ENCODE measurements at regions of chr17 and their contacts with region 1.

Region 1: GRCh38 chr17:31433091-31433790 is 41.8 kb downstream of the RAB11FIP4 start:
- DNase-seq: peak; percentile 20 to 71 (median 55)
- ATAC-seq: peak; percentile 89
- H3K4me3 ChIP-seq: no peak overlapping the region
- H3K4me3 Mint-ChIP-seq: peak overlapping the region; percentile 62
- H3K27ac ChIP-seq: no peak overlapping the region
- H3K27ac Mint-ChIP-seq: peak overlapping the region; percentile 33
- H3K4me1 ChIP-seq: peaks cover 16% of the 10 kb centered on the region
- H3K4me1 Mint-ChIP-seq: peaks cover 20% of the 10 kb centered on the region
- H3K27me3 ChIP-seq: peaks cover 0 to 2% of the 10 kb centered on the region in 2 experiments
- H3K27me3 Mint-ChIP-seq: peaks cover 13% of the 10 kb centered on the region
- CTCF ChIP-seq: no peak

Region 2: GRCh38 chr17:31388770-31389661 is 44.2 kb before region 1 on chr17:
- CTCF ChIA-PET with region 1: interaction called, 12 read pairs
- POLR2A ChIA-PET with region 1: no interaction called
- intact Hi-C with region 1: no loop called
- DNase-seq: peak in 8 of 9 experiments; percentile 16 to 70 (median 52)
- ATAC-seq: peak; percentile 71
- H3K4me3 ChIP-seq: no peak overlapping the region
- H3K4me3 Mint-ChIP-seq: no peak overlapping the region
- H3K27ac ChIP-seq: no peak overlapping the region
- H3K27ac Mint-ChIP-seq: no peak overlapping the region
- H3K4me1 ChIP-seq: peaks cover 11% of the 10 kb centered on the region
- H3K4me1 Mint-ChIP-seq: peaks cover 9% of the 10 kb centered on the region
- H3K27me3 ChIP-seq: peaks cover 8 to 10% of the 10 kb centered on the region in 2 experiments
- H3K27me3 Mint-ChIP-seq: peaks cover 30% of the 10 kb centered on the region
- CTCF ChIP-seq: peak; percentile 58

Region 3: DNA sequence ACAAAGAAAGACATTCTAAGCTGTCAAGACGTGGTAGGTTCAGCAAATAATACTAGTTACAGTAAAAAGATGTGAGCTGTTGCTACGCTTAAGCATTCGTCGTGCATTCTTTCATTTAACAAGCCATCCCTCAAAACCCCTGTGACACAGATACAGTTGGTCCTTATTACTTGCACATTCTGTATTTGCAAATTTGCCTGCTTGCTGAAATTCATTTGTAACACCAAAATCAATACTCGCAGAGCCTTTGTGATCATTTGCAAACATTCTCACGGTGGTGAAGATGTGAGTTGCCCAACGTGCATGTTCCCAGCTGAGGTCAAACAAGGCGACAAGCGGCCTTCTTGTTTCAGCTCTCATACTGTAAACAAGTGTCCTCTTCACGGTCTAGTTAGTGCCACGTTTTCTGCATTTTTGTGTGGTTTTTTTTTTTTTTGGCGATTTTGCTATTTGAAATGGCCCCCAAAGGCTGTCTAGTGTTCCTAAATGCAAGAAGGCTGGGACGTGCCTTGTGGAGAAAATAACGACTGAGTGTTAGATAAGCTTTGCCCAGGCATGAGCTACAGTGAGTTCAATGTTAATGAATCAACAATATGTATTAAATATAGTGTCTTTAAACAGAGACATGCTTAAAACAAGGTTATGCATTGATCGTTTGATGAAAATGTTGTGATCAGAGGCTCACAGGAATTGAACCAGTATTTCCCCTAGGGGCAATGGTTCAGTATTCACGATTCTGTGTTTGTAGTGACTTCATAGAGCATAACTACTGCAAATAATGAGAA is 42.3 kb after region 1 on chr17:
- CTCF ChIA-PET with region 1: interaction called, 17 read pairs
- POLR2A ChIA-PET with region 1: no interaction called
- intact Hi-C with region 1: no loop called
- DNase-seq: no peak
- ATAC-seq: no peak
- H3K4me3 ChIP-seq: no peak overlapping the region
- H3K4me3 Mint-ChIP-seq: no peak overlapping the region
- H3K27ac ChIP-seq: no peak overlapping the region
- H3K27ac Mint-ChIP-seq: no peak overlapping the region
- H3K4me1 ChIP-seq: peaks cover 1% of the 10 kb centered on the region
- H3K4me1 Mint-ChIP-seq: peaks cover 4% of the 10 kb centered on the region
- H3K27me3 ChIP-seq: no peaks in the 10 kb centered on the region
- H3K27me3 Mint-ChIP-seq: no peaks in the 10 kb centered on the region
- CTCF ChIP-seq: no peak

Region 4: GRCh38 chr17:31487648-31488263 is 54.5 kb after region 1 on chr17:
- CTCF ChIA-PET with region 1: interaction called, 5 read pairs
- POLR2A ChIA-PET with region 1: interaction called, 5 read pairs
- intact Hi-C with region 1: loop called in 1 of 2 experiments (anchors 5 kb)
- DNase-seq: peak; percentile 92 to 98 (median 96)
- ATAC-seq: peak; percentile 91
- H3K4me3 ChIP-seq: peak overlapping the region; percentile 80 to 83
- H3K4me3 Mint-ChIP-seq: peak overlapping the region; percentile 92
- H3K27ac ChIP-seq: peak overlapping the region; percentile 85 to 89
- H3K27ac Mint-ChIP-seq: peak overlapping the region; percentile 96
- H3K4me1 ChIP-seq: peaks cover 49% of the 10 kb centered on the region
- H3K4me1 Mint-ChIP-seq: peaks cover 50% of the 10 kb centered on the region
- H3K27me3 ChIP-seq: no peaks in the 10 kb centered on the region
- H3K27me3 Mint-ChIP-seq: no peaks in the 10 kb centered on the region
- CTCF ChIP-seq: no peak

Region 5: GRCh38 chr17:31517524-31517923 is 84.3 kb after region 1 on chr17:
- CTCF ChIA-PET with region 1: interaction called, 265 read pairs
- POLR2A ChIA-PET with region 1: no interaction called
- intact Hi-C with region 1: no loop called
- DNase-seq: peak in 1 of 9 experiments; percentile 28
- ATAC-seq: no peak
- H3K4me3 ChIP-seq: no peak overlapping the region
- H3K4me3 Mint-ChIP-seq: no peak overlapping the region
- H3K27ac ChIP-seq: no peak overlapping the region
- H3K27ac Mint-ChIP-seq: no peak overlapping the region
- H3K4me1 ChIP-seq: peaks cover 23% of the 10 kb centered on the region
- H3K4me1 Mint-ChIP-seq: peaks cover 32% of the 10 kb centered on the region
- H3K27me3 ChIP-seq: no peaks in the 10 kb centered on the region
- H3K27me3 Mint-ChIP-seq: no peaks in the 10 kb centered on the region
- CTCF ChIP-seq: peak; percentile 16